Esophagus muscularis mucosa (tissue), 4 donors: ENCODE measurements at regions of chr19 and their contacts with region 1.

Region 1: GRCh38 chr19:17282488-17283255 is 971 bp downstream of the ANKLE1 start:
- DNase-seq: peak; percentile 96
- H3K4me3 ChIP-seq: peak overlapping the region; percentile 35 to 57 (median 48)
- H3K27ac ChIP-seq: no peak overlapping the region
- H3K4me1 ChIP-seq: peaks cover 14 to 20% (median 18%) of the 10 kb centered on the region in 4 donors
- H3K27me3 ChIP-seq: peaks cover 0 to 29% (median 12%) of the 10 kb centered on the region in 4 donors
- CTCF ChIP-seq: peak; percentile 91 to 96 (median 95)
- EP300 ChIP-seq: no peak
- POLR2A ChIP-seq: no peak

Region 2: DNA sequence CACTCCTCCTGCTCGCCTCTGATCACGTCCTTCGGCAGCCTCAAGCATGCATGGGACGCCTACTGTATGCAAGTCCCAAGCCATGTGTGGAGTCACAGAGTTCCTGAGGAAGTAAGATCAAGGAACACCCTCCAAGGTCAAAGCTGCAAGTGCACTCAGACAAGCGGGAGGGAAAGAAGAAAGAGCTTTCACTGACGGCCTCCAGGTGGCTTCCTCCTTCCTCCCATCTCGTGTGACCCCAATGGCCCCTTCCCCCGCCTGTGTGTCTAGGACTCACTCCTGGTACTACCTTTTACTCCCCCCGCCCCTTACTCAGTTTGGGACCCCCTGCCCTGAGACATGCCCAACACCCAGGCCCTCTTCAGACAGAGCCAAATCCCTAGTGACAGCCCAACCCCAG is 213.5 kb before region 1 on chr19:
- intact Hi-C with region 1: loop called (anchors 2 kb)
- DNase-seq: no peak
- H3K4me3 ChIP-seq: no peak overlapping the region
- H3K27ac ChIP-seq: no peak overlapping the region
- H3K4me1 ChIP-seq: peaks cover 11 to 20% (median 14%) of the 10 kb centered on the region in 4 donors
- H3K27me3 ChIP-seq: no peaks in the 10 kb centered on the region
- CTCF ChIP-seq: no peak
- EP300 ChIP-seq: no peak
- POLR2A ChIP-seq: no peak

Region 3: DNA sequence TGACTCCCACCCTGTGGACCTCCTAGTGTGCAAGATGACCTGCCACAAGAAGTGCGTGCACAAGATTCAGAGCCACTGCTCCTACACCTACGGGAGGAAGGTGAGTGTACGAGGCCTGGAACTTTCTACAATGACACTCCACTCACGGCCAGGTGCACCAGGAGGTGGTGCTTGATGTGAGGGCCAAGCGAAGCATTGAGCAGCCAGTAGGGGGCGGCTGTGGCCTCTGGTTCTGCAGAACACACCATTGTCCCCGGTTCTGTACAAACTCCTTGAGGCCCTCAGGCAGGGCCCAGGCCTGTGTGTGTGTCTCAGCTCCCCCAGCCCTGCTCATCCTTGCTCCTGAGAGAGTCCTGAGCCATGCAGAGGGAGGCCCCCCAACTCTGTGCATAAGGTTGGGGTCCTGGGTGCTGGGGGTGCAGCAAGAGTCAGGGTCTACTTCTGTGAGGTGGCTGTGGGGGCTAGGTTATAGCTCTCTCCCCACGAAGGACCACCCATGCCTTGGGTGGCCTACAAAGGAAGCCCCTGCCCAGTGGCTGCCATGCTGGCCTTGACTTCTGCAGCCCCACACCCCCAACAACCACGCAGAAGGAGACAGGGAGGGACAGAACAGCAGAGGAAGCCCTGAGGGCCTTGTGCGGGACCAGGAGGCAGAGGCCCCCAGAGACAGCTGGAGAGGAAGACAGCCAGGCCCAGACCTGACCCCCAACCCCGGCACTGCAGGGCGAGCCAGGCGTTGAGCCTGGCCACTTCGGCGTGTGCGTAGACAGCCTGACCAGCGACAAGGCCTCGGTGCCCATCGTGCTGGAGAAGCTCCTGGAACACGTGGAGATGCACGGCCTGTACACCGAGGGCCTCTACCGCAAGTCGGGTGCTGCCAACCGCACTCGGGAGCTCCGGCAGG is 77.2 kb before region 1 on chr19:
- intact Hi-C with region 1: loop called (anchors 1 kb)
- DNase-seq: no peak
- H3K4me3 ChIP-seq: no peak overlapping the region
- H3K27ac ChIP-seq: no peak overlapping the region
- H3K4me1 ChIP-seq: no peaks in the 10 kb centered on the region
- H3K27me3 ChIP-seq: no peaks in the 10 kb centered on the region
- CTCF ChIP-seq: peak; percentile 60 to 78 (median 74)
- EP300 ChIP-seq: no peak
- POLR2A ChIP-seq: no peak